MCF 10A (cell line): ENCODE measurements at regions of chr2 and their contacts with region 1.

Region 1: DNA sequence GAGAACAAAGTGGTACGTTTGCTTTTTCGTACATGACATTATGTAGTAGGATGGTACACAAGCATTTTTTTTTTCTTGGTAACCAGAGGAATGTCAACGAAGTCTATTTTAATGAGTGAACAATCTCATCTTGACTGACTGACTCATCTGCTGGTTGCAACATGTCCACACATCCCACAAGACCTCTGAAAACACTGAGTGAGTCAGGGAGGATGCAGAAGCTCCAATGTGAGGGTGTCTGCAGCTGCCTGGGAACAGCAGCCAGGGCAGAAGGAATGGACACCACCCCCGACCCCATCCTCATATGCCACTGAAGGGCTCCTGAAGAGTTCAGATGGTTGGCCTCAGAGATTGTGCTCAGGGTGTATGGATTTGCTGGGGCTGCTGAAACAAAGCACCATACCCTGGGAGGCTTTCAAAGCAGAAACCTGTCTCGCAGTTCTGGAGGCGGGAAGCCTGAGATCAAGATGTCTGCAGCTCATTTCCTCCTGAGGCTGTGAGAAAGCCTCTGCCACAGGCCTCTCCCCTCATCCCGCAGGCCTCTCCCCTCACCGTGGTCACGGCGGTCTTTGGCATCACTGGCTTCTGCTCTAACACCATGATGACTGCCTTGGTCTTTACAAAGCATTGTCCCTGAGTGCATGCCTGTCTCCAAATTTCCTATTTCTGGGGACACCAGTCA is 124.6 kb downstream of the LRATD1 start:
- DNase-seq: peak; percentile 93
- H3K4me3 Mint-ChIP-seq: peak overlapping the region; percentile 20
- H3K27ac Mint-ChIP-seq: no peak overlapping the region
- H3K4me1 Mint-ChIP-seq: peaks cover 19% of the 10 kb centered on the region
- H3K27me3 Mint-ChIP-seq: no peaks in the 10 kb centered on the region
- CTCF ChIP-seq: no peak

Region 2: DNA sequence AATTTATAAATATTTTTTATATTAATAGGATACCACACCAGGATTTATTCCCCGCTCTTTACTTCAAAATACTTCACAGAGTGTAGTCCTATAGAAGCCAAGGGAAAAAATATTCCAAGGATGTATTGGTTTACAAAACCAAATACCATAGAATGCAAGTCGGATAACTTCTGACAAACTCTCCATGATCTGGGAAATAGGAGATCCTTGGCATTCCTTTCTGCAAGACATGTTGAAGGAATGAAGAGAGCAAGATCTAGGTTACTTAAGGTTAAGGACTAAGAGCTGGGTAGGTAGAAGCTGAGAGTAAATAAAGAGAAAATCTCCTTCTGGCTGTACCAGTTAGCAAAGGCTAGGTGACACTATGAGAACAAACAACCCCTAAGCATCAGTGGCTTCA is 16.6 kb after region 1 on chr2:
- CTCF ChIA-PET with region 1: no interaction called
- POLR2A ChIA-PET with region 1: interaction called, 3 read pairs
- intact Hi-C with region 1: loop called (anchors 1 kb)
- DNase-seq: no peak
- H3K4me3 Mint-ChIP-seq: no peak overlapping the region
- H3K27ac Mint-ChIP-seq: no peak overlapping the region
- H3K4me1 Mint-ChIP-seq: peaks cover 9% of the 10 kb centered on the region
- H3K27me3 Mint-ChIP-seq: no peaks in the 10 kb centered on the region
- CTCF ChIP-seq: no peak